ENCODE measurements at regions of chr17 and their contacts with region 1.

Region 1: DNA sequence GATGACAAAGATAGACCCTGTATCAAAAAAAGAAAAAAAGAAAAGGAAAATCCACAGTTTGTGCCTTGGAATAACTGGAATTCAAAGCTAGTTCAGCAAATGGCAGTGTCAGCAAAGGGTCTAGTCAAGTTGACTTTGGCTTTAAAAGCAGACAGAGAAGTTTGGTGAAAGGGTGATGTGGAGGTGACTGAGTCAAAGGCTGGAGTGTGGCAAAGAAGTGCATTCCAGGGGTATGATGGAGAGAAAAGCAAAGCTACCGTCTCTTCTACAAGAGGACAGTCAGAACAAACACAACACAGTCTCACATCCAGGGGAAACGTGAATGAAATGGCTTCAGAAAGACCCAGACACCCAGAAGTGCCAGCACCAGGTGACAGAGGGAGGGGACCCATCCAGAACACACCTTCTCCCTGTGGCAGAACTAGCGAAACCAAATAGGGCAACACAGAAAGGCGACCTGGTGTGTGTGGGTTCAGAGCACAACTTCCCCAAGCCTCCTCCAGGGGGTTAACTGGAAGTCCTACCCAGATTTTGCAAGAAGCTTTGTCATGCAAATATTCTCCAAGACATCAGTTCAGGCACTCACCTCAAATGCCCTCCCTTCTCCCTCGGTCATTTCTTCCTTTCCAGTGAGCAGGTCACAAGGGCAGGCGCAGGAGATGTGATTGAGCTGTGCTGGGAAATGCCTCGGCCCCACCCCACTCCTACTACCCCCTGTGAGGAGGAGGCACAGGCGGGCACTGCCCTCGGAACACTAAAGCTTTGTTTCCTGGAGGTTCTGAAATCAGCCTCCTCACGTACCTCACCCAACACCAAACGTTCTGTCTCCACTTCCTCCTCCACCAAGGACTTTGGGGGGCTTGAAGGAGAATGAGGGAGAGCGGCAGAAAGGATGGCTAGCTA is 481.9 kb downstream of the SOX9 start:
- DNase-seq: peak; percentile 97
- ATAC-seq: peak; percentile 92 to 93
- H3K4me3 ChIP-seq: 0 out of 3 replicates have a peak overlapping the region, but pooled peaks have one; percentile 10
- H3K27ac ChIP-seq: peak overlapping the region; percentile 90 to 95
- H3K4me1 ChIP-seq: peaks cover 65% of the 10 kb centered on the region
- CTCF ChIP-seq: no peak
- EP300 ChIP-seq: peak; percentile 72 to 79; a peak in 2 of 5 replicates
- POLR2A ChIP-seq: no peak
- RAD21 ChIP-seq: peak; percentile 32 to 33; a peak in 2 of 5 replicates

Region 2: DNA sequence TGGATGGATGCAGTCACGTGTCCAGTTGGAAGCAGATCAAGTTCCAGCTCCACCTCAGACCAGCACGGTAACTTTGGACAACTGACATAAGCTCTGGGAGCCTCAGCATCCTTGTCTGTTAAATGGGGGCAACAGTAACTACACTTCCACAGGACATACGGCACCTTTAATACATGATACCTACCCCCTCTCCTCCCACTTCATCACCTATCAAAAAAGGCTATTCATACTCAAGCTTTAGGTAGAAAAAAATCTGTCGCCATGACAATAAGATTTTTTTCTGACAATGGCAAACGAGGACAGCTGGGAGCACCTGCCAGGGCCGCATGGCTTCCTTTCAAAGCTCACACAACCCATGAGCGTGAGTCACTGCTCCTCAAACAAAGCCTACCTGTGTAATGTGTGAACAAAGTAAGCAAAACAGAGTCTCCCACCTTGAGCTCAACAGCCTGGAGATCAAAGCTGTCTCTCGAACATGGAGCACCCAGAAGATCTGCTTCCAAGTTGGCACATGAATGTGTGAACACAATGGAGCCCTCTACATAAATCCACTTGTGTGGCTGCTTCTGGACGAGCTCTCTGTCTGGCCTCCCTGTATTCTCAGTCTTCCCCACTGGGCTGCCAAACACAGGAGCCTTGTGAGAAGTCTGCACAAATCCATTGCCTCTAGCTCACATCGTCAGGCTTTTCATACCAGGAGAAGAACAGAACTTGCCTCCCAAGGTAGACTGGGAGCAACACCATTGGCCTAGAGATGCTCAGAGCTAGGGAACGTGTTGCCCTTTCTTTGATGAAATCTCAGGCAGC is 22.2 kb before region 1 on chr17:
- CTCF ChIA-PET with region 1: interaction called, 21 read pairs
- POLR2A ChIA-PET with region 1: interaction called, 14 read pairs
- DNase-seq: peak in 1 of 2 experiments; percentile 50
- ATAC-seq: peak; percentile 42 to 47
- H3K4me3 ChIP-seq: no peak overlapping the region
- H3K27ac ChIP-seq: peak overlapping the region in 1 of 2 experiments; percentile 45; a peak in 3 of 6 replicates
- H3K4me1 ChIP-seq: peaks cover 58% of the 10 kb centered on the region
- CTCF ChIP-seq: no peak
- EP300 ChIP-seq: no peak
- POLR2A ChIP-seq: no peak
- RAD21 ChIP-seq: no peak

Region 3: DNA sequence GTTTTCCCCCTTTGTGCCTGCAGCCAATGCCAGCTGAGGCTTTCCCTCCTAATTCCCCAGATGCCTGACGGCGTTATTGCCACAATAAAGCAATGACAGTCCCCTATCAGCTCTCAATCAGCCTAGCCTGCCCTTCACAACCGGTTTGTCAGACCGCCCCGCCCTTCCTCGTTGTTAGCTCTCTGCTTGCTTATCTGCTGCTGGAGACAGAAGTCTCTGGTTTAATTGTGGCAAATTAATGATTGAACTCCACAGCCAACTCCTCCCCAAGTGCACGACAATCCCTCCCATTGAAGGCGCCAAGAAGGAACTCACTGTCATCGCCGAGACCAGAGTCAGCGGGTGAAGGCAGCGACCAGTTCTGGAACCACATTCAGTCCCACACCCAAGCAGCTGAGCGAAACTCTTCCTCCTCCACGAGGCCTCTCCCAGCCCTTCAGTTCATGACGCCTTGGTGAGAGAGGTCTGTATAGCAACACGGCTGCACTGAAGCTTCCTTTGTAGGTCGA is 15.3 kb after region 1 on chr17:
- CTCF ChIA-PET with region 1: interaction called, 49 read pairs
- POLR2A ChIA-PET with region 1: interaction called, 49 read pairs
- DNase-seq: peak in 1 of 2 experiments; percentile 43
- ATAC-seq: no peak
- H3K4me3 ChIP-seq: no peak overlapping the region
- H3K27ac ChIP-seq: peak overlapping the region; percentile 89 to 99; a peak in 5 of 6 replicates
- H3K4me1 ChIP-seq: peaks cover 48% of the 10 kb centered on the region
- CTCF ChIP-seq: no peak
- EP300 ChIP-seq: no peak
- POLR2A ChIP-seq: no peak
- RAD21 ChIP-seq: no peak

Region 4: GRCh38 chr17:72651988-72652387 is 49.2 kb after region 1 on chr17:
- CTCF ChIA-PET with region 1: no interaction called
- POLR2A ChIA-PET with region 1: no interaction called
- DNase-seq: no peak
- ATAC-seq: no peak
- H3K4me3 ChIP-seq: no peak overlapping the region
- H3K27ac ChIP-seq: peak overlapping the region in 1 of 2 experiments; percentile 22; a peak in 1 of 6 replicates
- H3K4me1 ChIP-seq: 0 out of 3 replicates have a peak, but pooled peaks cover 4% of the 10 kb centered on the region
- CTCF ChIP-seq: no peak
- EP300 ChIP-seq: no peak
- POLR2A ChIP-seq: no peak
- RAD21 ChIP-seq: no peak

Region 5: DNA sequence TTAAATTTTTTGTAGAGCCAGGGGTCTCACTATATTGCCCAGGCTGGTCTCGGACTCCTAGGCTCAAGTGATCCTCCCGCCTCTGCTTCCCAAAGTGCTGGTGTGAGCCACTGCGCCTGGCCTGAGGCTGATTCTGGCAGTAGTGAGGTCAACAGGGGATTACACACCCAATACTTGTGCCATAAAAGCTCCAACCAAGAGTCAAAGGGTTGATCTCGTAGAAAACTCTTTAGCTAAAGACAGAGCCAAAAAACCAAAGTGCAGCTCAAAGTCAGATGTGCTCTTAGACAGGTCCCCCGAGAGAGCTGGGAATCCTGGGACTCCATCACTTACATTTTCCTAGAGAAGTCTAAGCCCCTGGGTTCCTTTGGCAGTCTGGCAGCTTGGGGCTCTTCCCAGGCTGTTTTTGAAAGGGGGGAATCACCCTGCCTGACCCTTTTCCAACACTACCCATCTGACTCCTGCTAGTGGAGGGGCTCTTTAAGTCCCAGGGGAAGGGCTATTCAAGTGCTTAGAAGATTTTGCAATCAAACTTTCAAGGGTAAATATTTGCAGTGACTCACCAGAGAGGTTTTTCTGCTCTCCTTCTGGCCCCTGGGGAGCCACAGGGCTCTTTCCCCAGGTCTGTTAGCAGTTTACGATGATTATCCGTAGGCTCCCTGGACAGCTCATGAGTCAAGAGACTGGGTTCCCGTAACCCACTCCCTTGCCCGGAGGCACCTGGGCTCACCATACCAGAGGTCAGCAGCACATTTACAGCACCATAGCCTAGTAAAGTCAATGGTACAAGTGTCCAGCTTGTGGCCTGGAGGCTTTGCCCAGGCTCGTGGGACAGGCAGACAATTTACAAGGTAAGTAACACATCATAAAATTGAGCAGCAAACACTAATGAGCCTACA is 81.0 kb after region 1 on chr17:
- CTCF ChIA-PET with region 1: interaction called, 12 read pairs
- POLR2A ChIA-PET with region 1: interaction called, 25 read pairs
- DNase-seq: peak; percentile 98 to 100
- ATAC-seq: peak; percentile 91 to 94
- H3K4me3 ChIP-seq: peak overlapping the region; percentile 6; the same call in 1 of the 3 replicates
- H3K27ac ChIP-seq: peak overlapping the region; percentile 89 to 94
- H3K4me1 ChIP-seq: peaks cover 48% of the 10 kb centered on the region
- CTCF ChIP-seq: no peak
- EP300 ChIP-seq: peak; percentile 96 to 97
- POLR2A ChIP-seq: no peak
- RAD21 ChIP-seq: peak; percentile 57 to 80

Region 6: GRCh38 chr17:72699545-72699944 is 96.8 kb after region 1 on chr17:
- CTCF ChIA-PET with region 1: interaction called, 3 read pairs
- POLR2A ChIA-PET with region 1: interaction called, 15 read pairs
- DNase-seq: no peak
- ATAC-seq: no peak
- H3K4me3 ChIP-seq: no peak overlapping the region
- H3K27ac ChIP-seq: peak overlapping the region; percentile 55 to 85
- H3K4me1 ChIP-seq: peaks cover 53% of the 10 kb centered on the region
- CTCF ChIP-seq: no peak
- EP300 ChIP-seq: no peak
- POLR2A ChIP-seq: no peak
- RAD21 ChIP-seq: no peak